Sciatic nerve (tissue), 2 donors: ENCODE measurements at regions of chr1 and their contacts with region 1.

Region 1: GRCh38 chr1:2506007-2506860 is 20.2 kb downstream of the PANK4 start:
- DNase-seq: no peak
- ATAC-seq: no peak

Region 2: GRCh38 chr1:2422523-2422922 is 83.7 kb before region 1 on chr1:
- intact Hi-C with region 1: loop called (anchors 5 kb)
- DNase-seq: no peak
- ATAC-seq: no peak